Activated naive CD4-positive, alpha-beta T cell treated with anti-CD3 and anti-CD28 coated beads, Interleukin-2, amount 10 ng/mL, durations not matched to agents 7 days and 5 days (primary cell): ENCODE measurements at regions of chr22 and their contacts with region 1.

Region 1: DNA sequence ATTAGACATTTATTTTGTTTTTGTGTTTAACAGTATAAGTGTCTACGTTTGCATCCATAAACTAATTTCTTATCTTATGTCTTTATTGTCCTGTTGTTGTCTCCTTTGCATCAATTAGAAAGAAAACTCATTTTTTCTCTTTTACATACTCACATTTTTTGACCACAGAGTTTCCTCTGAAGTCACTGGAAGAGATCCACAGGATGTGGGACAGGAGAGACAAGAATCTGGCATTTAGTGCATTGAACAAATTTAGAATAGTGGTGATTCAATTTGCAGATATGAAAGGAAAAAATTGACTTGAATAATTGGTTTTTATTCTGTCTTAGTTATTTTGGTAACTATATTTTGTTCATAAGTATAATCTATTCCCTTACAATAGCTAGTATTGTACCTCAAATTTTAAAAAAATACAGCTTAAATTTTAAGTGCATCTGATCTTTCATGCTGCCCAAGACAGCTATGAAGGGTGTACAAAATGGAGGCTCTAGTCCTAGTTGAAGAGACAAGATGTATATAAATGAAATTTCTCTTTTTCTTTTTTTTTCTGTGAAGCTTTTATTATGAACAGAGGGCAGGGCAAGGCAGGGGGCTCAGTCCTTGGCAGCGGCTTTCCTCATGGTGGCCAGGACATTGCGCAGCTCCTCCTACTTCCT is 24.4 kb downstream of the HORMAD2 start:
- DNase-seq: peak; percentile 27
- H3K4me3 Mint-ChIP-seq: peak overlapping the region; percentile 7
- H3K27ac Mint-ChIP-seq: peak overlapping the region; percentile 67
- H3K4me1 Mint-ChIP-seq: peaks cover 72% of the 10 kb centered on the region
- H3K27me3 Mint-ChIP-seq: no peaks in the 10 kb centered on the region

Region 2: GRCh38 chr22:30038219-30038618 is 66.4 kb before region 1 on chr22:
- CTCF ChIA-PET with region 1: no interaction called
- DNase-seq: no peak
- H3K4me3 Mint-ChIP-seq: no peak overlapping the region
- H3K27ac Mint-ChIP-seq: no peak overlapping the region
- H3K4me1 Mint-ChIP-seq: no peaks in the 10 kb centered on the region
- H3K27me3 Mint-ChIP-seq: peaks cover 10% of the 10 kb centered on the region

Region 3: GRCh38 chr22:30116362-30117117 is 11.9 kb after region 1 on chr22:
- CTCF ChIA-PET with region 1: interaction called, 11 read pairs
- DNase-seq: no peak
- H3K4me3 Mint-ChIP-seq: no peak overlapping the region
- H3K27ac Mint-ChIP-seq: no peak overlapping the region
- H3K4me1 Mint-ChIP-seq: peaks cover 30% of the 10 kb centered on the region
- H3K27me3 Mint-ChIP-seq: no peaks in the 10 kb centered on the region

Region 4: DNA sequence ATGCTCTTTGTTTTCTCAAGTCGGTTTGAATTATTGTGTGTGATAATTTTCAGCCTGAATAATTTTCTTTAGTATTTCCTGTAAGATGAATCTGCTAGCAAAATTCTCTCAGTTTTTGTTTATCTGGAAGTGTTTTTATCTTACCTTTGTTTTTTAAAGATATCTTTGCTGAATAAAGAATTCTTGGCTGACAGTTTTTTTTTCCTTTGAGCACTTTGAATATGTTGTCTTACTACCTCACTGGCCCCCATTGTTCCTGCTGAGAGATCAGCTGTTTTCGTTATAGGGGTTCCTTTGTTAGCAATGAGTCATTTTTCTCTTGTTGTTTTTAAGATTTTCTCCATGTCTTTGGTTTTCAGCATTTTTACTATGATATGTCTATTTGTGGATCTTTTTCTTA is 38.6 kb after region 1 on chr22:
- CTCF ChIA-PET with region 1: no interaction called
- DNase-seq: no peak
- H3K4me3 Mint-ChIP-seq: no peak overlapping the region
- H3K27ac Mint-ChIP-seq: no peak overlapping the region
- H3K4me1 Mint-ChIP-seq: no peaks in the 10 kb centered on the region
- H3K27me3 Mint-ChIP-seq: no peaks in the 10 kb centered on the region

Region 5: GRCh38 chr22:30178181-30179126 is 73.8 kb after region 1 on chr22:
- CTCF ChIA-PET with region 1: interaction called, 28 read pairs
- DNase-seq: peak; percentile 67
- H3K4me3 Mint-ChIP-seq: peak overlapping the region; percentile 41
- H3K27ac Mint-ChIP-seq: peak overlapping the region; percentile 93
- H3K4me1 Mint-ChIP-seq: peaks cover 86% of the 10 kb centered on the region
- H3K27me3 Mint-ChIP-seq: no peaks in the 10 kb centered on the region

Region 6: DNA sequence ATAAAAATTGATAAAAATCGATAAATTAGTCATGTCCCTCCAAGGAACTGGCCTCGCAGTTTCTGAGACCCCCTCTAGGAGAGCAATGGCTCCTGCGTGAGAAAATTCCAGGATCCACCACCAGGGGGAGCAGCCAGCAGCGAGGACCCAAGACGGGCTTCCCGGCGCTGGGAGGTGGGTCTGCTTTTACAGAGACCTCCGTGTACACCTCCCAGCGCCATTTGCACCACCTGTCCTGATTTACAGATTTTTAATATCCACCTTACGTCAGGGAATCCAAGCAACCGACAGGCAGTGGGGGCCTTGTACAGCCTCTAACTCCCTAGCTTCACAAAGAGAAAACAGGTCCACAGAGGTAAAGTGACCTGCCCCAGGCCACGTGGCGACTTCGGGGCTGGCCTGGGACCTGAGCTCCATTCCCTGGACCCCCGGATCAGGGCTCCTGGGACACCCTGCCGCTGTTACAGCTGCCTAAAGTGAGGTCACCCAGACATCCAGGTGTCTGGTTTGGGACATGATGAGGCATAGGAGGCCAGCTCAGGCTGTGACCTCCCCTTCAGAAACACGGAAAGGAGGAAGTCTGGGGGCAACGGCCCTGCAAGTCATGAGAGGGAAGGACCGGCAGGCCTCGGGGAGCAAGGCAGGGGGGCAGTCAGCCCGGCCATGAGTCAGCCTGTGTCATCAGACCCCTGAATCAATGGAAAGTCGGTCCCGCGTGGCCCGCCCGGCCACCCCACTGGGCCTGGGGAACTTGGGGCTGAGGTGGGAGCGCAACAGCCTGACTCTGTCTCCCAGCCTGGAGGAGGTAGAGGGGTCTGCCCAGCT is 158.5 kb after region 1 on chr22:
- CTCF ChIA-PET with region 1: interaction called, 15 read pairs
- DNase-seq: peak; percentile 88
- H3K4me3 Mint-ChIP-seq: peak overlapping the region; percentile 100
- H3K27ac Mint-ChIP-seq: peak overlapping the region; percentile 84
- H3K4me1 Mint-ChIP-seq: peaks cover 69% of the 10 kb centered on the region
- H3K27me3 Mint-ChIP-seq: no peaks in the 10 kb centered on the region